ENCODE measurements at regions of chr17 and their contacts with region 1.

Region 1: DNA sequence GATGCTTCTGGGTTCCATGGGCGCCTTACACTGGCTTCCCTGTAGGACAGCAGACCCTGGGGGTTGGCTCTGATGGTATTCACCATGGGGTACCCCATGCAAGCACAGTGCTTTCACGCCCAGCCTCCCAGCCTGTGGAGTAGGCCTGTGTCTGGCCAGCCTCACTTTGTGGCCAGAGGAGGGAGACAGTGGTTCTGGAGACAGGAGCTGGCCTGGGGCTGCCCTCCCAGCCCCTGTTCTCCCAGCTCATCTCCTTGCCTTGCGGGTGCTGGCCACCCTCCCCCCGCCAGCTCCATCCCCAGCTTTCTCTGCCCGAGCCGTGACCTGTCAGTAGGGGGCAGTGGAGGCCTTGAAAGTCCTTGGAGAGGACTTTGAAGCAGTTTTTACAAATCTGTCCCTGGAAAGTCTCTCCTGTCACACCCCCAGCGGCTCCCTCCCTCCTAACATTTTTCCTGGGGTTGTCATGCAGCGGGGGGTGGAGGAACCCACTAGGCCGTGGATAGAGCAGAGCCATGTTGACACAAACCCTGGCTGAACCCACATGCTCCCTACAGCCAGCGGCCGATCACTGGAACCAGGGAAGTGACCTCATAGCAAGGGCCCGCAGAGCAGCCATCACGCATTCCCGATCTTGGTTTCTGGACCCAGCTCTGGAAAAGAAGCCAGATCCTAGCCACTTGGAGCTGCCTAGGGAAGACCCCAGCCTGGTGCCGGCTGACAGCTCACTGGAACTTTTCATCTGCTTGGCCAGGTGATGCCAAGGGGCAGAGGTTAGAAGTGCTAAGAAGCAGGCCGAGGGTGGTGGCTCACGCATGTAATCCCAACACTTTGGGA is 289.4 kb downstream of the SEC14L1 start:
- DNase-seq: peak; percentile 75 to 90 (median 84)
- ATAC-seq: peak; percentile 46
- H3K4me3 ChIP-seq: no peak overlapping the region
- H3K4me3 Mint-ChIP-seq: peak overlapping the region; percentile 62
- H3K27ac ChIP-seq: peak overlapping the region in 1 of 2 donors; percentile 29
- H3K27ac Mint-ChIP-seq: peak overlapping the region; percentile 93
- H3K4me1 ChIP-seq: peaks cover 100% of the 10 kb centered on the region
- H3K4me1 Mint-ChIP-seq: peaks cover 93% of the 10 kb centered on the region
- H3K27me3 ChIP-seq: no peaks in the 10 kb centered on the region
- H3K27me3 Mint-ChIP-seq: no peaks in the 10 kb centered on the region
- CTCF ChIP-seq: peak; percentile 77

Region 2: GRCh38 chr17:77331301-77331864 is 98.8 kb before region 1 on chr17:
- CTCF ChIA-PET with region 1: interaction called, 36 read pairs
- POLR2A ChIA-PET with region 1: interaction called, 66 read pairs
- intact Hi-C with region 1: loop called (anchors 2 to 5 kb)
- DNase-seq: peak; percentile 92 to 99 (median 98)
- ATAC-seq: peak; percentile 84
- H3K4me3 ChIP-seq: peak overlapping the region; percentile 51
- H3K4me3 Mint-ChIP-seq: peak overlapping the region; percentile 90
- H3K27ac ChIP-seq: peak overlapping the region; percentile 47 to 55
- H3K27ac Mint-ChIP-seq: peak overlapping the region; percentile 88
- H3K4me1 ChIP-seq: peaks cover 52% of the 10 kb centered on the region
- H3K4me1 Mint-ChIP-seq: peaks cover 59% of the 10 kb centered on the region
- H3K27me3 ChIP-seq: no peaks in the 10 kb centered on the region
- H3K27me3 Mint-ChIP-seq: no peaks in the 10 kb centered on the region
- CTCF ChIP-seq: peak; percentile 92

Region 3: GRCh38 chr17:77391668-77392375 is 38.3 kb before region 1 on chr17:
- CTCF ChIA-PET with region 1: interaction called, 9 read pairs
- POLR2A ChIA-PET with region 1: interaction called, 368 read pairs
- intact Hi-C with region 1: loop called in 1 of 2 experiments (anchors 5 kb)
- DNase-seq: peak in 10 of 14 experiments; percentile 33 to 76 (median 53)
- ATAC-seq: peak; percentile 41
- H3K4me3 ChIP-seq: peak overlapping the region; percentile 19
- H3K4me3 Mint-ChIP-seq: peak overlapping the region; percentile 65
- H3K27ac ChIP-seq: peak overlapping the region; percentile 31
- H3K27ac Mint-ChIP-seq: peak overlapping the region; percentile 90
- H3K4me1 ChIP-seq: peaks cover 91% of the 10 kb centered on the region
- H3K4me1 Mint-ChIP-seq: peaks cover 88% of the 10 kb centered on the region
- H3K27me3 ChIP-seq: no peaks in the 10 kb centered on the region
- H3K27me3 Mint-ChIP-seq: no peaks in the 10 kb centered on the region
- CTCF ChIP-seq: no peak

Region 4: DNA sequence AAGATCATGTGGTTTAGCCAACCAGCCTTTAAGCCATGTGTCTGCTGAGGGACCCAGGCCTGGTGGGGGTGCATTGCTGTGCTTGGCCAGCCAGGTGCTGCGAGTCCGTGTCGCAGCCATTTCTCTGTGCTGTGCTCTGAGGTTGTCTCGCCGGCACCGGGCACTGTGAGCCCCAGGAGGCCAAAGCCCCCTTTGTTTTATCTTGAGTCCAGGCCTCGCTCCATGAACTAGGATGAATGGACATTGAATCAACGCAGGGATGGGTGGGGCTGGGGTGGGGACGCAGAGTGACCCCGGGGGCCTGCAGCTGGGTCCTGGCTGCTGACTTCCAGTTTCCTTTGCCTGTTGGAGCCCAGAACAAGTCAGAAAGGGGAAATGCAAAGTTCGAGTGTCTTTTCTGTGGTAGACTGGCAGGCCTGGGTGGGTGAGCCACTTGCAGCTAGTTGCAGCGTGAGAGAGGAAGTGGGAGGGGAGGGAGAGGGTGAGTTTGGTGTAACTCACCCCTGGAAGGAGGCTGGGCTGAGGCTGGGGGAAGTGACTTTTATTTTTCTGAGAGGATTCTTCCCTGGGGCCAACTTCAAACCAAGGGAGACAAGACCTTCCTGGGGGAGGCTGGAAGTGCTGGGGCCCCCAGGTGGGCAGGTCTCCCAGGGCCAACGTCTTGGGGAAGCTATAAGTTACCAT is 35.4 kb after region 1 on chr17:
- CTCF ChIA-PET with region 1: interaction called, 3 read pairs
- POLR2A ChIA-PET with region 1: interaction called, 681 read pairs
- intact Hi-C with region 1: no loop called
- DNase-seq: peak; percentile 63 to 91 (median 78)
- ATAC-seq: peak; percentile 93
- H3K4me3 ChIP-seq: peak overlapping the region; percentile 39
- H3K4me3 Mint-ChIP-seq: peak overlapping the region; percentile 85
- H3K27ac ChIP-seq: peak overlapping the region; percentile 58 to 74
- H3K27ac Mint-ChIP-seq: peak overlapping the region; percentile 96
- H3K4me1 ChIP-seq: peaks cover 100% of the 10 kb centered on the region
- H3K4me1 Mint-ChIP-seq: peaks cover 84% of the 10 kb centered on the region
- H3K27me3 ChIP-seq: no peaks in the 10 kb centered on the region
- H3K27me3 Mint-ChIP-seq: no peaks in the 10 kb centered on the region
- CTCF ChIP-seq: no peak

Region 5: GRCh38 chr17:77476931-77477877 is 47.1 kb after region 1 on chr17:
- CTCF ChIA-PET with region 1: interaction called, 12 read pairs
- POLR2A ChIA-PET with region 1: interaction called, 36 read pairs
- intact Hi-C with region 1: loop called (anchors 2 kb)
- DNase-seq: peak in 2 of 14 experiments; percentile 47 to 48
- ATAC-seq: peak; percentile 33
- H3K4me3 ChIP-seq: no peak overlapping the region
- H3K4me3 Mint-ChIP-seq: peak overlapping the region; percentile 74
- H3K27ac ChIP-seq: peak overlapping the region; percentile 58 to 75
- H3K27ac Mint-ChIP-seq: peak overlapping the region; percentile 97
- H3K4me1 ChIP-seq: peaks cover 98% of the 10 kb centered on the region
- H3K4me1 Mint-ChIP-seq: peaks cover 79% of the 10 kb centered on the region
- H3K27me3 ChIP-seq: no peaks in the 10 kb centered on the region
- H3K27me3 Mint-ChIP-seq: no peaks in the 10 kb centered on the region
- CTCF ChIP-seq: no peak

Measured in CD4-positive, alpha-beta T cell (primary cell).